Vagina (tissue), 2 donors: ENCODE measurements at regions of chr16 and their contacts with region 1.

Region 1: GRCh38 chr16:77850636-77851333 is 62.4 kb downstream of the VAT1L start:
- DNase-seq: no peak
- H3K4me3 ChIP-seq: no peak overlapping the region
- H3K27ac ChIP-seq: no peak overlapping the region
- H3K4me1 ChIP-seq: no peaks in the 10 kb centered on the region
- H3K27me3 ChIP-seq: no peaks in the 10 kb centered on the region
- CTCF ChIP-seq: no peak
- POLR2A ChIP-seq: no peak

Region 2: DNA sequence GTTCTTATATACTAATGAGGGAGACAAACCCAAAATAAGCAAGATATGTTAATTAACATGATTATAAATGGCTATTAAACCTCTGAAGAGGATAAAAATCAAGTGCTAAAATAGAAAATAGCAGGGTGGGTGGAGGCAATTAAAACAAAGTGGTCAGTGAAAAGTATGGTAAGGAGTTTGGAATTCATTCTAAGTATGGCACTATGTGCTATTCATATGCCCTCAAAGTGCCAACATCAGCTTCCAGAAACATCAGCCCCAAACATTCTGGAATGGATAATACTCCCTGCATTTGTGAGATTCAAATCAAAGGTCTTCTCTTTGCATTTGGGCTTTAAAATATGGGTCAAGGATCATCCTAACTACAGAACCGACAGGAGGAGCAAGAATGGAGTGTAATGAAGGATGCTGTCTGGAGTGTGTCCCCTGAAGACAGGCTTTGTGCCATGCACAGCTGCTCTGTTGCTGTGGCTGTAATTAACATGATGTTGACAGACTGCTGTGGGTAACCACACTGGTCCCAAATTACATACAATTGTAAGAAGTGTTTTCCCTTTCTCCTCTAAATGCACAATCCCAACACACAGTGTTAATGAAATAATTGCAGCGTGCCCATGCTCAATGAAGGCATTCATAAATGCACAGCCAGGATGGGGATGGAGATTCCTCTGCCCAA is 30.7 kb after region 1 on chr16:
- intact Hi-C with region 1: loop called (anchors 1 kb)
- DNase-seq: no peak
- H3K4me3 ChIP-seq: no peak overlapping the region
- H3K27ac ChIP-seq: no peak overlapping the region
- H3K4me1 ChIP-seq: no peaks in the 10 kb centered on the region
- H3K27me3 ChIP-seq: no peaks in the 10 kb centered on the region
- CTCF ChIP-seq: no peak
- POLR2A ChIP-seq: no peak

Region 3: DNA sequence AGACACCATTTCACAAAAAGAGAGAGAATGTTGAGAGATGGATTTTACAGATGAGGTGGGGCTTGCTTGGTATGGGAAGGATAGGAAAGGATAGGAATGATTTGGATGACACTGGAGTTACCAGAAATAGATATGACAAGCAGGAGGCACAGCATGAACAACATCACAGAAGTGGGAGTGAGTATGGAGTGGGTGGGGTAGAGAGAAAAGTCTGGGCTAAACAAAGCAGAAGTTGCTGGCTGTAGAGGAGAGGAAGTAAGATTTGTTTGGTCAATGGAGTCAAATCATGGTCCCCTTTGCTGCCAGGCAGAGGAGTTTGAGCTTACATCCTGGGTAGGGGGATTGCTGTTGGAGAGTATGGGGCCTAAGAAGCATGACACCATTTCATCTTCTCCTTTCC is 39.3 kb after region 1 on chr16:
- intact Hi-C with region 1: loop called (anchors 1 kb)
- DNase-seq: no peak
- H3K4me3 ChIP-seq: no peak overlapping the region
- H3K27ac ChIP-seq: no peak overlapping the region
- H3K4me1 ChIP-seq: no peaks in the 10 kb centered on the region
- H3K27me3 ChIP-seq: no peaks in the 10 kb centered on the region
- CTCF ChIP-seq: no peak
- POLR2A ChIP-seq: no peak